SK-N-SH (cell line): ENCODE measurements at regions of chr7 and their contacts with region 1.

Region 1: DNA sequence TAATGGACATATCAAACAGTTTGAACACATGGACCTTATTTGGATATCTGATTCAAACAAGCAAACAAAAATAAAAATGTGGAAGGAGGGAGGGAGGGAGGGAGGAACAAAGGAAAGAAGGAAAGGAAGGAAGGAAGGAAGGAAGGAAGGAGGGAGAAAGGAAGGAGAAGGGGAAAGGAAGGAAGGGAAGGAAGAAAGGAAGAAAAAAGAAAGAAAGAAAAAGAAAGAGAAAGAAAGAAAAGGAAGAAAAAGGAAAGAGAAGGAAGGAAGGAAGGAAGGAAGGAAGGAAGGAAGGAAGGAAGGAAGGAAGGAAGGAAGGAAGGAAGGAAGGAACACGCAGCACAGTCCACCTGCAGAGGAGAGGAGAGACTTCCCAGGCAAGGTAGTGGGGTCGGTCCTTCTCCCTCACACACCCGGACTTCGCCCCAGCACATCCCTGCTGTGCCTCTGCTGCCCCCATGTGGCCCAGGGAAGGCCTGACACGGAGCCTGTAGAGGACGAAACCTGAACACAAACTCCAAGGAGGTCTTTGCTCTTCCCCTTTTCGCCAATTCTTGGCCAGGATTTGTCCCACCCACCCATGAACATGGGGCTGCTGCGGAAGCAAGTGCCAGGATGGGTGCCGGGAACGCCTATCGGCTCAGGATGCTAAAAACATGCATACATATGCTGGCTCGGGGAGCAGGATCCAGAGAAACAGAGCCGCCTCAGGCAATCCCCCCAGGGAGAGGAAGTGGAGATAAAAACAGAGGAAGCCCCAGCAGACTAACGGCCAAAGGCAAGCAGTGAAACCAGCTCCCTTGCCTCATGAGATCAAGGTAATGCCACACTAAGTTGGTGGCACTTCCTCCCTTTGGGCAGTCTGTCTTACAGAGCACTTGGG is 52.3 kb upstream of the DGKI start:
- DNase-seq: peak; percentile 89
- H3K4me3 ChIP-seq: no peak overlapping the region; a peak in 1 of 4 replicates
- H3K27ac ChIP-seq: peak overlapping the region; percentile 17 to 36; a peak in 3 of 4 replicates
- H3K4me1 ChIP-seq: peaks cover 0 to 8% of the 10 kb centered on the region in 2 experiments; a peak in 1 of 4 replicates
- H3K27me3 ChIP-seq: no peaks in the 10 kb centered on the region
- CTCF ChIP-seq: peak; percentile 99
- EP300 ChIP-seq: no peak
- RAD21 ChIP-seq: peak; percentile 98

Region 2: GRCh38 chr7:137613006-137613405 is 286.1 kb before region 1 on chr7:
- CTCF ChIA-PET with region 1: interaction called, 76 read pairs
- POLR2A ChIA-PET with region 1: no interaction called
- DNase-seq: no peak
- H3K4me3 ChIP-seq: no peak overlapping the region
- H3K27ac ChIP-seq: no peak overlapping the region
- H3K4me1 ChIP-seq: peaks cover 0 to 3% of the 10 kb centered on the region in 2 experiments; a peak in 2 of 4 replicates
- H3K27me3 ChIP-seq: no peaks in the 10 kb centered on the region
- CTCF ChIP-seq: no peak
- EP300 ChIP-seq: no peak
- RAD21 ChIP-seq: no peak

Region 3: GRCh38 chr7:137915266-137915665 is 16.2 kb after region 1 on chr7:
- CTCF ChIA-PET with region 1: interaction called, 22 read pairs
- POLR2A ChIA-PET with region 1: no interaction called
- DNase-seq: no peak
- H3K4me3 ChIP-seq: no peak overlapping the region
- H3K27ac ChIP-seq: no peak overlapping the region
- H3K4me1 ChIP-seq: peaks cover 0 to 9% of the 10 kb centered on the region in 2 experiments; a peak in 1 of 4 replicates
- H3K27me3 ChIP-seq: no peaks in the 10 kb centered on the region
- CTCF ChIP-seq: no peak
- EP300 ChIP-seq: no peak
- RAD21 ChIP-seq: no peak

Region 4: GRCh38 chr7:137933270-137934017 is 34.4 kb after region 1 on chr7:
- CTCF ChIA-PET with region 1: interaction called, 10 read pairs
- POLR2A ChIA-PET with region 1: no interaction called
- DNase-seq: peak; percentile 47
- H3K4me3 ChIP-seq: no peak overlapping the region
- H3K27ac ChIP-seq: peak overlapping the region; percentile 75 to 92
- H3K4me1 ChIP-seq: peaks cover 36 to 54% of the 10 kb centered on the region in 2 experiments
- H3K27me3 ChIP-seq: no peaks in the 10 kb centered on the region
- CTCF ChIP-seq: no peak
- EP300 ChIP-seq: peak in 1 of 2 experiments; percentile 81; a peak in 2 of 4 replicates
- RAD21 ChIP-seq: no peak

Region 5: GRCh38 chr7:138002096-138002827 is 103.2 kb after region 1 on chr7:
- CTCF ChIA-PET with region 1: interaction called, 642 read pairs
- POLR2A ChIA-PET with region 1: no interaction called
- DNase-seq: peak; percentile 94
- H3K4me3 ChIP-seq: peak overlapping the region; percentile 84 to 93
- H3K27ac ChIP-seq: peak overlapping the region; percentile 88 to 90
- H3K4me1 ChIP-seq: peaks cover 14 to 25% of the 10 kb centered on the region in 2 experiments; a peak in 2 of 4 replicates
- H3K27me3 ChIP-seq: no peaks in the 10 kb centered on the region
- CTCF ChIP-seq: peak; percentile 100
- EP300 ChIP-seq: 0 out of 4 replicates have a peak, but pooled peaks of 1 of the 2 experiments have one; percentile 6
- RAD21 ChIP-seq: peak; percentile 72

Region 6: GRCh38 chr7:138015096-138015495 is 116.0 kb after region 1 on chr7:
- CTCF ChIA-PET with region 1: interaction called, 642 read pairs
- POLR2A ChIA-PET with region 1: no interaction called
- DNase-seq: no peak
- H3K4me3 ChIP-seq: no peak overlapping the region
- H3K27ac ChIP-seq: no peak overlapping the region
- H3K4me1 ChIP-seq: no peaks in the 10 kb centered on the region
- H3K27me3 ChIP-seq: no peaks in the 10 kb centered on the region
- CTCF ChIP-seq: no peak
- EP300 ChIP-seq: no peak
- RAD21 ChIP-seq: no peak